WTC11 (cell line): ENCODE measurements at regions of chr10 and their contacts with region 1.

Region 1: DNA sequence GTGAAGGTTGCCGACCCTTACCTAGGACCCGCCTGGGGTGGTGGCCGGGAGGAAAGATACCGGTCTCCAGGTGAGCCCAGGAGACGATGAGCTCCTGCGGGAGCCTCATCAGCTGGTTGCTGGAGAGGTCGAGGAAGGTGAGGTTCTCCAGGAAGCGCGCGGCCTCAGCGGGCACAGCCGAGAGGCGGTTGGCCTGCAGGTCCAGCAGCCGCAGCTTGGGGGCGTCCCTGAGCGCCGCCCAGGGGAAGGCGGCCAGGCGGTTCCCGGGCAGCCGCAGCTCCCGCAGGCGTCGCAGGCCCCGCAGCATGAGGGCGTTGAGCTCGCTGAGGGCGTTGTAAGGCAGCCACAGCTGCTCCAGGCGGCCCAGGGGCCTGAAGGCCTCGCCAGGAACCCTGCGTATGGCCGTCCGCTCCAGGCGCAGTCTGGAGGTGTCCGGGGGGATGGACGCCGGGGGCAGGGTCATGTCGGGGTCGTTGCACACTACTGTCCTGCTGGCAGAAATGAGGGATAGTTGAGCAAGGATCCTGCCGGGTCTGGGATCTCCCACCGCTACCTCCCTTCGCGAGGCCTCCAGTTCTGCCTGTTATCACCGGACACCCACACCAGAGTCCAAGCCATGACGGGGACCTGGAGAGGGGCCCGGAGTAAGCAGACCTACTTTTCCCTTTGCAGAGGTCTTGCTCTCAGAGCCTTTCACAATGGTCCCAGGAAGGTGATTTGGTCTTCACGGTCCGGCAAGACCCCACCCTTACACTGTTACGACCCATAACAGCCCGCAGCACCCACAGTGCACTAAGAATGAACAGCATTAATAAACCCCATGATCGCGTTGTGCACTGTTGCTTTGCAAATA is 3.9 kb downstream of the LRIT1 start:
- DNase-seq: peak; percentile 84
- ATAC-seq: peak; percentile 98
- H3K4me3 Mint-ChIP-seq: no peak overlapping the region
- H3K27ac Mint-ChIP-seq: no peak overlapping the region
- H3K4me1 Mint-ChIP-seq: 0 out of 2 replicates have a peak, but pooled peaks cover 4% of the 10 kb centered on the region
- H3K27me3 Mint-ChIP-seq: peaks cover 27% of the 10 kb centered on the region
- CTCF ChIP-seq: peak; percentile 86

Region 2: DNA sequence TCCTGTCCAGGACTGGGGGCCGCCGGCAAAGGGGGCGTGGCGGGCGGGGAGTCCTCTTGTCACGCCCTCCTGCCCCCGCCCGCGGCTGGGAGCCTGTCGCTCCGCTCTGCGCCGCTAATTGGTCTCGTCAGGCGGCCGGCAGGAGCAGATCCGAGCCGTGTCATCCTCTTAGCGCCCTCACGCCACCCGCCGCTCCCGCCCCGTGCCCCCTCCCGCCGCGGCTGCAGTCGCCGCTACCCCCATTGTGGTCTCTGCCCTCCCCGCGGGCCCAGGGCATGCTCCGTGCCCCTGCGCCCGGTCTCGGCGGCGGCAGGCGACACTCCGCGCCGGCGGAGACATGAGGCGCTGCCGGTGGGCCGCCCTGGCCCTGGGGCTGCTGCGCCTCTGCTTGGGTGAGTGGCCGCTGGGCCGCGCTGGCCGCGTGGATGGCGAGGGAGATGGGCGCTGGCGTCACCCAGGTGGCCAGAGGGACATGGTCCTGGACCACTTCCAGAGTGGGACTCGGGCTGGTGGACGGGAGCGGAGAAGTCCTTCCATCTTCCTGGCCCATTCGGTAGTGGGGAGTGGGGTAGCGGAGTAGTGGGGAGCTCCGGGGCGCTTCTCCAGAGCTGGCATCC is 42.9 kb before region 1 on chr10 and contains the start of gene CDHR1:
- CTCF ChIA-PET with region 1: interaction called, 10 read pairs
- POLR2A ChIA-PET with region 1: no interaction called
- DNase-seq: peak; percentile 73
- ATAC-seq: peak; percentile 85
- H3K4me3 Mint-ChIP-seq: peak within 1 kb of the TSS; percentile 68
- H3K27ac Mint-ChIP-seq: no peak within 1 kb of the TSS
- H3K4me1 Mint-ChIP-seq: peaks cover 9% of the 10 kb centered on the region; the same call in 1 of the 2 replicates
- H3K27me3 Mint-ChIP-seq: peaks cover 57% of the 10 kb centered on the region
- CTCF ChIP-seq: no peak
- total RNA-seq, gene CDHR1: 5.0 to 7.2 TPM (median 6.4 TPM) in 3 replicates

Region 3: GRCh38 chr10:84224411-84225028 is 12.9 kb before region 1 on chr10:
- CTCF ChIA-PET with region 1: interaction called, 36 read pairs
- POLR2A ChIA-PET with region 1: no interaction called
- DNase-seq: peak; percentile 71
- ATAC-seq: peak; percentile 88
- H3K4me3 Mint-ChIP-seq: no peak overlapping the region
- H3K27ac Mint-ChIP-seq: no peak overlapping the region
- H3K4me1 Mint-ChIP-seq: no peaks in the 10 kb centered on the region
- H3K27me3 Mint-ChIP-seq: peaks cover 10% of the 10 kb centered on the region
- CTCF ChIP-seq: no peak

Region 4: GRCh38 chr10:84429926-84430520 is 192.6 kb after region 1 on chr10:
- CTCF ChIA-PET with region 1: interaction called, 10 read pairs
- POLR2A ChIA-PET with region 1: no interaction called
- DNase-seq: peak; percentile 89
- ATAC-seq: peak; percentile 99
- H3K4me3 Mint-ChIP-seq: no peak overlapping the region
- H3K27ac Mint-ChIP-seq: peak overlapping the region; percentile 71; the same call in 1 of the 2 replicates
- H3K4me1 Mint-ChIP-seq: peaks cover 7% of the 10 kb centered on the region
- H3K27me3 Mint-ChIP-seq: no peaks in the 10 kb centered on the region
- CTCF ChIP-seq: peak; percentile 72